Activated naive CD4-positive, alpha-beta T cell treated with anti-CD3 and anti-CD28 coated beads for 36 hours (primary cell): ENCODE measurements at regions of chr7 and their contacts with region 1.

Region 1: GRCh38 chr7:81469869-81470723 is 299.8 kb downstream of the HGF start:
- DNase-seq: peak; percentile 63
- H3K4me3 Mint-ChIP-seq: no peak overlapping the region
- H3K27ac Mint-ChIP-seq: no peak overlapping the region
- H3K4me1 Mint-ChIP-seq: no peaks in the 10 kb centered on the region
- H3K27me3 Mint-ChIP-seq: no peaks in the 10 kb centered on the region

Region 2: DNA sequence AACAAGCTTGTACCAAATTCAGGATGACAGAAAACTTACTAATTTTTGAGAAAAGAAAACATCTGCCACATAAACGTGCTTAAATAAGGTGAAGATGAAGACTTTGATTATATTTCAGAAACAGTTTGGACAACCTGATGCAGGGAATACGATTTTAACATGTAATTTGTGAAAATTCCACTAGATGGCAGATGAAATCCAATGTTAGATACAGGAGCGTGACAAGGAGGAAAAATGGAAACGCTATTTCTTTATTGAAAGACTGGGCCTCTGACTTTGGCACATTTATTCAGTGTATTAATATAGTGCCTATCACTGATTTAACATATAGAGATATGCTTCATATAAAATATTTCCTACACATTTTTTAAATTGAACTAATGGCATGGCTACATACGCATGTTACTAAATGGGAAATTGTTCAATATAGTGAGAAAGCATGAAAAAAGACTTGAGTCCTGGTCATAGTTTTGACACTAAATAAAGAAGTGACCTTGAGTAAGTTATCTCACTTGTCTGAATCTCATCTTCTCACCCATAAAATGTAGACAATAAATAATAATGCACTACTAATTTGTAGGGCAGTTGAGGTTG is 771.0 kb before region 1 on chr7:
- CTCF ChIA-PET with region 1: interaction called, 7 read pairs
- intact Hi-C with region 1: loop called (anchors 1 kb)
- DNase-seq: no peak
- H3K4me3 Mint-ChIP-seq: no peak overlapping the region
- H3K27ac Mint-ChIP-seq: no peak overlapping the region
- H3K4me1 Mint-ChIP-seq: no peaks in the 10 kb centered on the region
- H3K27me3 Mint-ChIP-seq: peaks cover 2% of the 10 kb centered on the region

Region 3: DNA sequence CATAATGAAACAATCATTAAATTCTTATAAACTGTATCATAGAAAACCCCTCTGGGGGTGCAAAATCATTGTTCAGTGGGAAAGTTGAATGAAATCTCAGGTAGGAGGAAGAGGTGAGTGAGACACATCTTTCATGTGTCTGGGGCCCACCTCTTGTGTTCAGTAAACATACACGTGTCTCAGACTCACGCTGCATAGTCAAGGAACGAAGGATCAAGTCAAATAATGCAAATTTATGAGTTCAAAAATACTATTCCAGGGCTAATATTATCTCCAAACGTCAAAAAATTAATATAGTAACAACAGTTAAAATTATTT is 549.8 kb before region 1 on chr7:
- CTCF ChIA-PET with region 1: no interaction called
- intact Hi-C with region 1: loop called (anchors 1 kb)
- DNase-seq: no peak
- H3K4me3 Mint-ChIP-seq: no peak overlapping the region
- H3K27ac Mint-ChIP-seq: no peak overlapping the region
- H3K4me1 Mint-ChIP-seq: peaks cover 8% of the 10 kb centered on the region
- H3K27me3 Mint-ChIP-seq: peaks cover 45% of the 10 kb centered on the region

Region 4: GRCh38 chr7:81534996-81535395 is 64.9 kb after region 1 on chr7:
- CTCF ChIA-PET with region 1: no interaction called
- intact Hi-C with region 1: no loop called
- DNase-seq: no peak
- H3K4me3 Mint-ChIP-seq: no peak overlapping the region
- H3K27ac Mint-ChIP-seq: no peak overlapping the region
- H3K4me1 Mint-ChIP-seq: no peaks in the 10 kb centered on the region
- H3K27me3 Mint-ChIP-seq: no peaks in the 10 kb centered on the region